ENCODE measurements at regions of chr7 and their contacts with region 1.

Region 1: GRCh38 chr7:39580149-39580874 is 14.1 kb downstream of the YAE1 start:
- DNase-seq: peak; percentile 92 to 96 (median 93)
- H3K4me3 ChIP-seq: no peak overlapping the region
- H3K27ac ChIP-seq: no peak overlapping the region
- H3K4me1 ChIP-seq: peaks cover 0 to 6% (median 3%) of the 10 kb centered on the region in 4 experiments
- H3K27me3 ChIP-seq: no peaks in the 10 kb centered on the region

Region 2: DNA sequence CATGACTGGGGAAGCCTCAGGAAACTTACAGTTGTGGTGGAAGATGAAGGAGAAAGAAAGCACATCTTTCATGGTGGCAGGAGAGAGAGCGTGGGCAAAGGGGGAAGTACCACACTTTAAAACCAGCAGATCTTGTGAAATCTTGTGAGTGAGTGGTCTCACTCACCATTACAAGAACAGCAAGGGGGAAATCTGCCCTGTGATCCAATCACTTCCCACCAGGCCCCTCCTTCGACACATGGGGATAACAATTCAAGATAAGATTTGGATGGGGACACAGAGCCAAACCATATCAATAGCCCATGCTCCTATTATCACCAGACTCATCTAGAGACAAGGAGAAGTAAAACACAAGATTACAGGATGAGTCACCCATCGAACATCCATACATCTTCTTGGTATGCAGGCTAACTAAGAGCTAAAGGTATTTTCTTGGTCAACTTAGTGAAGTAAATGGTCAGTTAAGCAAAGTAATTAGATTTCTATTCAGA is 69.4 kb before region 1 on chr7:
- CTCF ChIA-PET with region 1: no interaction called
- POLR2A ChIA-PET with region 1: no interaction called
- DNase-seq: peak in 2 of 3 donors; percentile 72 to 77
- H3K4me3 ChIP-seq: no peak overlapping the region
- H3K27ac ChIP-seq: no peak overlapping the region
- H3K4me1 ChIP-seq: peaks cover 4 to 68% (median 44%) of the 10 kb centered on the region in 4 experiments
- H3K27me3 ChIP-seq: no peaks in the 10 kb centered on the region

Region 3: GRCh38 chr7:39536951-39537350 is 43.4 kb before region 1 on chr7:
- CTCF ChIA-PET with region 1: no interaction called
- POLR2A ChIA-PET with region 1: no interaction called
- DNase-seq: no peak
- H3K4me3 ChIP-seq: no peak overlapping the region
- H3K27ac ChIP-seq: no peak overlapping the region
- H3K4me1 ChIP-seq: peaks cover 6 to 10% (median 8%) of the 10 kb centered on the region in 4 experiments
- H3K27me3 ChIP-seq: no peaks in the 10 kb centered on the region

Region 4: DNA sequence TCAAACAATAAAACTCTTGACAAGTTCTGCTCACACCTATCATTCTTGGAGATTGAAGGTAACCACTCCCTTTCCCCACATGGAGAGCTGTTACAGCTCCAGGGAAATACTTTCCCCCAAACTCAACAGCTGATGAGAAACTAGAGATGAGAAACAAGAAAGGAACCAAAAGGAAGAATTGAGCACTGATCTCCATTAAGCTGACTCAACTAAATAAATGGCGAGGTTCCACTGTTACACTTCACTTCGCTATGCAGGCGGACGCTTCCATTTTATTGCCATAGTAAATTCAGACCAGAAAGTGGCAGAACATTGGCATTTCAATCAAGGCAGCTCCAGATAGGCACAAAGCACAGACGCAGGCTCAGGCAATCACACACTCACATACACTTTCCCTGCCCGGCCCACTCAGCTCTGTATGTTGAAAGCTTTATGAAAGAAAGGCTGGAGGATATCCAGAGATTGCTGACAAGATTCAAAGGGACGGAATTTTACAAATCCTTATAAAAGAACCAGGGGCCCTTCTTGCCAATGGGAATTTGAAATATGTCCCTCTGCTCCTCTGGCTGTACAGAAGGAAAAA is 25.6 kb before region 1 on chr7:
- CTCF ChIA-PET with region 1: no interaction called
- POLR2A ChIA-PET with region 1: no interaction called
- DNase-seq: no peak
- H3K4me3 ChIP-seq: no peak overlapping the region
- H3K27ac ChIP-seq: no peak overlapping the region
- H3K4me1 ChIP-seq: no peaks in the 10 kb centered on the region
- H3K27me3 ChIP-seq: no peaks in the 10 kb centered on the region

Region 5: DNA sequence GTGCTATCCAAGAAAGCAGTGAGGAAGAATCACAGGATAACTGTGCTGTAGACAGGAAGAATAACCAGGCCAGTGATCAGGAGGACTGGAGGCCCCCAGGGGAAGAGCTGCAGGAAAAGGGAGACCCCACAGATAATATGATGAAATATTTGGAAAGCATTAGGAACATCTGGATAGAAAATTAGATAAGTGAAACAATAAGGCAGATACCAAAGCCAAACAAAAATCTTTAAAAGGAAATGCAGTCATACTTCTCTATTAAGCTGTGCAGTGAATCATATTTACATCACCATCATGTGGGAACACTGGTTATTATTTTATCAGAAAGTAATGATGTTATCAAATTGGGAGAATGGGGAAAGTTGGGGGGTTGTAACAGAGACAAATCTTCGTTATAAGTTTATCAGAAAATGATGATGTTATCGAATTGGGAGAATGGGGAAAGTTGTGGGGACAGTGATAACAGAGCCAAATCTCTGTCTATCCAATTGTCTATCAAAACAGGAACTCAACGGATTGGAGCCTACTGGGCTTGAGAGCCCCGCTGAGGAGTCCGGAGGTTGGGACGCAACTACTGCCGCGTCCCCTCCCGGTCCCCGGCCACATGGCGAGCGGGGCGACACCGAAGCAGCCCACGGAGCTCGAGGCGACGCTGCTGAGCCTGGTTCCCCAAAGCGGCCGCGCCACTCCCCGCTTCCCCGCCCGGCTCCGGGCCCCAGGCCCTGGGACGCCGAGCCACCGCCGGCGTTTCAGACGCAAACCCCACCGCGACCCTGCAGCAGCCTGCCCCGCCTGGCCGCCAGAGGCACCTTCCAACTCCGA is 29.0 kb after region 1 on chr7:
- CTCF ChIA-PET with region 1: interaction called, 22 read pairs
- POLR2A ChIA-PET with region 1: interaction called, 3 read pairs
- DNase-seq: peak in 2 of 3 donors; percentile 67 to 81
- H3K4me3 ChIP-seq: peak overlapping the region in 6 of 7 experiments; percentile 29 to 70 (median 41)
- H3K27ac ChIP-seq: no peak overlapping the region
- H3K4me1 ChIP-seq: peaks cover 9 to 34% (median 11%) of the 10 kb centered on the region in 4 experiments
- H3K27me3 ChIP-seq: no peaks in the 10 kb centered on the region

Region 6: GRCh38 chr7:39623018-39623731 is 42.9 kb after region 1 on chr7 and contains the start of gene RALA:
- CTCF ChIA-PET with region 1: interaction called, 51 read pairs
- POLR2A ChIA-PET with region 1: no interaction called
- DNase-seq: peak; percentile 76 to 84 (median 76)
- H3K4me3 ChIP-seq: peak within 1 kb of the TSS; percentile 71 to 96 (median 90)
- H3K27ac ChIP-seq: peak within 1 kb of the TSS; percentile 57 to 88
- H3K4me1 ChIP-seq: peaks cover 12 to 59% (median 41%) of the 10 kb centered on the region in 4 experiments
- H3K27me3 ChIP-seq: no peaks in the 10 kb centered on the region

Region 7: DNA sequence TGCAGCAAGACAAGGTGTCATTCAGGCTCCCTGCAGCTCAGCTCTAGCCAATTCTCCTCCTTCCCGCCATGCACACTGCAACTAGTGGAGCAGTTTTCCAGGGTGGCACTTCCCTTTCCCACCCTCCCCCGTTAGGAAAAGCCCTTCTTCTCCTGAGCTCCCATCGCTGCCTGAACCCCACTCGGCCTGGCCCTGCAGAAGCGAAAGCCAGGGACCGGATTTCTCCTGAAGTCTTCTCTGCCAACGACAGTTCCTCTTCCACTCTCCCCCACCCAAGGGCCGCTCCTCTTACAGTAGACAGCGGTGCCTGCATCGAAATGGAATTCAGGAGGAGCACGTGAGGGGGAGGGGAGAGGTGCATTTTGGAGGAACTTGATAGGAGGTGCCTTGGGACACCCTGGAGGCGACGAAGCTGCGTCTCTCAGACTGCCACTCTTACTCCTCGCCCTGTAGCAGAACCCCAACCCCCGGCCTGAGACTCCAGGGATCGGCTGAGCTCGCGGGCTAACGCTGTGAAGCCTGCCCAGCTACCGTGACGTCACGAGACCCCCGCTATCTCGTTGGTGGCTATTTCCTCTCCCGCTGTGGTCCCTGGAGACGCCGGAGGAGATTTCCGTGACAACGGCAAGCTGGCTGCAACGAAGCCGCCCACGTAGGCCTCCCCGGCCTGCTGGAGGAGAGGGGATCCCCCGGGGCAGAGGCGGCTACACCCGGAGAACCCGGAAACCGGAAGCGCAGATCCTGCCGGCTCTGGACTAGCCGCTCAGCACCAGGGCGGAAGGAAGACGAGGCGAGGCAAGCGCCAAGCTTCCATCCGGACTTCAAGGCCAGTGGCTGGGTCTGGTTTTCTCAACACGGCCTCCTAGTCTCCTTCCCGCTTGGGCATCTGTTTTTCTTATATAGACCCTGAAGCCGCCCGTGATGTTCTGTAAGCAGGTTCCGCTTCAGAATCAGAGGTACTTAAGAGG is 152.8 kb after region 1 on chr7:
- CTCF ChIA-PET with region 1: interaction called, 389 read pairs
- POLR2A ChIA-PET with region 1: interaction called, 3 read pairs
- DNase-seq: peak; percentile 97 to 99 (median 99)
- H3K4me3 ChIP-seq: peak overlapping the region; percentile 53 to 85 (median 69)
- H3K27ac ChIP-seq: peak overlapping the region; percentile 55 to 80
- H3K4me1 ChIP-seq: peaks cover 3 to 34% (median 24%) of the 10 kb centered on the region in 4 experiments
- H3K27me3 ChIP-seq: no peaks in the 10 kb centered on the region

Region 8: DNA sequence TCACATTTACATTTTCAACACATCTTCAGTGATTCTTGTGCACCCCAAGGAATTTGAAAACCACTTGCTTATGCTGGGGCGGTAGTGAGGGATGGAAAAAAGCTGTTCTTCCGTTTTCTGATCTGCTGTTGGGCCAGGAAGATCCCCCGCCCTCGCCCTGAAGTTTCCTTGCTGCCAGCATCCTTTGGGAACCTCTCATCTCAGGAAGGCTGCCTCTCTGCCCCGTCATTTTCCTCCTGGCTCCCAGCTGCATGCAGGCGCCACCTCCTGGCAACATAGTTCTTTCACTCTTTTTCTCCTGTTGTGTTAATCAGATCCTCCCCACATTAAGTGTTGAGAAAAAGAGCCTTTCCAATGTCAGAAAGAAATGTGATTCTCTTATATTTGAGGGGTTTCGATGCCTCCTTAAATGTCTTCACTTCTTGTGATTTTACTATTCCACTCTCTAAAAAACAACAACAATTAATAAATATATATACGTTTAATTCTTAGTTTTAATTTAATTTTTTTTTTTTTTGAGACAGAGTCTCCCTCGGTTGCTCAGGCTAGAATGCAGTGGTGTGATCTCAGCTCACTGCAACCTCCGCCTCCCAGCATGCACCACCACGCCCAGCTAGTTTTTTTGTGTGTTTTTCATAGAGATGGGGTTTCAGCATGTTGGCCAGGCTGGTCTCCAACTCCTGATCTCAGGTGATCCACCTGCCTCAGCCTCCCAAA is 165.9 kb after region 1 on chr7:
- CTCF ChIA-PET with region 1: interaction called, 389 read pairs
- POLR2A ChIA-PET with region 1: no interaction called
- DNase-seq: peak; percentile 63 to 70 (median 67)
- H3K4me3 ChIP-seq: peak overlapping the region in 1 of 7 experiments; percentile 37
- H3K27ac ChIP-seq: no peak overlapping the region
- H3K4me1 ChIP-seq: peaks cover 0 to 4% (median 1%) of the 10 kb centered on the region in 4 experiments
- H3K27me3 ChIP-seq: no peaks in the 10 kb centered on the region

Measured in common myeloid progenitor, CD34-positive (primary cell).